GM18951 (cell line): ENCODE measurements at regions of chr19 and their contacts with region 1.

Region 1: GRCh38 chr19:29714953-29715700 is at the start of gene C19orf12:
- POLR2A ChIP-seq: peak; percentile 92

Region 2: DNA sequence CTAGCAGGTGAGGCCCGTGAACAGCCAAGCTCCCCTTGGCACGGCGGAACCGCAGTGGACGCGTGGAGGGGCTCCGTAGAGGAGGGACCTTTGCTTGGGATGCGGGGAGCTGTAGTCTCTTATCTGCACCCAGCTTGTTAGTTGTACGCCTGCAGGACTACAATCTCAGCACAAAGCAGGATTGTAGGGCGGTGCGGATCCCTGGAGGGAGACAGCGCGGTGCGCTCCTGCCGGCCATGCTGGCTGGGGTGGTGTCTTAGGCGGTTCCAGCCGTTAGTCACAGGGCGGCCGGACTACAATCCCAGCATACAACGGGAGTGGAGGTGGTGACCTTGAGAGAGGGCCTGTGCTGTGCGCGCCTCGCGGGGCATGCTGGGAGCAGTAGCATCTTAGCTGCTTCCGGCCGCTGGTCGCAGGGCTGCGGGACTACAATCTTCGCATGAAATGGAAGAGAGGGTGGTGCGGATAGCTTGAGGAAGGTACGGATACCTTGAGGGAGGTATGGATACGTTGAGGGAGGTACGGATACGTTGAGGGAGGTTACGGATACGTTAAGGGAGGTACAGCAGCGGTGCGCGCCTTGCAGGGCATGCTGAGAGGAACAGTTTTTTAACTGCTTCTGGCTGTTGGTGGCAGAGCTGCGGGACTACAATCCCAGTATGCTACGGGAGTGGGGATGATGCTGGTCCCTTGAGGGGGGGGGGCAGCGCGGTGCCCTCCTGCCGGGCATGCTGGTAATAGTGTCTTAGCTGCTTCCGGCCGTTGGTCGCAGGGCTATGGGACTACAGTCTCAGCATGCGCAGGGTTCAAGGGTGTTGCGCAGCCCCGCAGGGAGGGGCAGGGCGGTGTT is 1921.3 kb before region 1 on chr19:
- in situ Hi-C with region 1: loop called (anchors 25 kb)
- POLR2A ChIP-seq: peak; percentile 75